ENCODE measurements at regions of chr18 and their contacts with region 1.

Region 1: DNA sequence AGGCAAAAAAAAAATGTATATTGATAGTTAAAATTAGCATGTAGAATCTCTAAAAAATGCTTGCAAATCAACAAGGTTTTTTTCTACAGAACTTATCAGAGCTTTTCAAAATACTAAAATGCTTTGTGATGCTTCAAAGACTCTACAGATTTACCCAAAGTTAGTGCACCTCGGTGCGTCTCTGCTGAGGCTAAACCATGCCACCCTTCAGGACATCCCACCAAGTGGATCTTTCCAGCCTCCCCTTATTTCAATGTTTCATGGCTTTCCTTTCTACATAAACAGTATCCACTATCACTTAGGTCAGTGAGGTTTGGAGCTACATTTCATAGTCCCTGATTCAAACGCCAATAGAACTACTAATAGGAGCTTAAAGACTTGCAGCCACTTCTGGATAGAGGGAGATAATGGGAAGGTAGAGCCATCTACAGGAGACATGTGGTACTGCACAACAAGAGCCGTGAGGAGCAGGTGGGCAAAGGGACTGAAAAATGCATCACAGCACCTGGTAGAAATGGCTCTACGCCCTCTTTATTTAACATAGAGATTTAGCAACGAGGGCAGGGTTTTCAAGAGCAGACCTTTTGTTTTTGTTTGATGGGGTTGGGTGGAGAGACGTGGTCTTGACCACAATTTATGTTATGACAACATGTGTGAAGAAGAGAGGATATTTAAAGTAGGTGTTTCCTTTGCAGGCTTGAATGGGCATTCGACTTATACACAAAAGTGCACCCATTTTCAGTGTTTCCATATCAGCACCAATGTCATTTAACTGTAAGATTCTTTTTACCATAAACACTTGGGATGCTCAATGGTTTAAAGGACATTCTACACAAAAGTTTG is 56.1 kb upstream of the SLC35G4 start:
- DNase-seq: peak; percentile 53
- H3K4me3 Mint-ChIP-seq: no peak overlapping the region
- H3K27ac Mint-ChIP-seq: no peak overlapping the region
- H3K4me1 Mint-ChIP-seq: no peaks in the 10 kb centered on the region
- H3K27me3 Mint-ChIP-seq: peaks cover 66% of the 10 kb centered on the region
- CTCF ChIP-seq: peak; percentile 76

Region 2: DNA sequence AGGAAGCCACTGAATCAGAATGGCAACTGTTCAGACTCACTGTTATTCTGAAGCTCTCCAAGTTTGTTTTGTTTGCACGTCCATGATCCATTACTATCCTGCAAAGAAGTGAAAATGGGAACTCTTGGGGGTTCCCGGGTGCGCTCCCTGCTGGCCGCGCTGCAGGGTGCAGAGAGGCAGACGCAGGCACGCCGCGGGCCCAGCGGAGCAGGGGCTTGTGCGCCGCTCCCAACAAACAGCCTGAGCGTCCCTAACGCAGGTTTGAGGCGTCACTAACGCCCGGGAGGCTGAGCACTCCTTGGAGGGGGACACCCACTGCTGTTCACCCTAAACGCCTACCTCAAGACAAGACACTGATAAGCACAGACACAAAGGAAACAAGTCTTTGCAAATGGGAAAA is 389.7 kb before region 1 on chr18:
- CTCF ChIA-PET with region 1: no interaction called
- intact Hi-C with region 1: loop called (anchors 10 kb)
- DNase-seq: peak; percentile 62
- H3K4me3 Mint-ChIP-seq: peak overlapping the region; percentile 36
- H3K27ac Mint-ChIP-seq: no peak overlapping the region
- H3K4me1 Mint-ChIP-seq: no peaks in the 10 kb centered on the region
- H3K27me3 Mint-ChIP-seq: peaks cover 44% of the 10 kb centered on the region
- CTCF ChIP-seq: peak; percentile 58

Region 3: DNA sequence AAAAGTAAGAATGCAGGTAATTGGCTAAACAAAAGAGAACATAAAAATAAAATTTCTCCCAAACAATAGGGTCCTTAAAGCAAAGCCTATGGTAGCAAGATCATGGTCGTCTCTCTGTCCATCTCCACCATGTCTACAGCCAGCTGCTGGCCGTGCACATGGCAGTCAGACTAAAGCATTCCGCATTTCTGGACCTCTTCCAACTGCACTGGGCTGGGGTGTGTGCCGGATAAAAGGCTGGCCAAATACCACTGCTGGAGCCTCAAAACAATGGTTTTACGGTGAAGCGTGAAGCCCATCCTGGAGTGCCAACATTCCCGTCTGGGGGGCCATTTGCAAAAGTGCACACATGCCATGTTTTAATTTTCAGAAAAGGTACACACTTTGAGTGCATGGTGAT is 329.2 kb before region 1 on chr18:
- CTCF ChIA-PET with region 1: no interaction called
- intact Hi-C with region 1: no loop called
- DNase-seq: no peak
- H3K4me3 Mint-ChIP-seq: no peak overlapping the region
- H3K27ac Mint-ChIP-seq: no peak overlapping the region
- H3K4me1 Mint-ChIP-seq: no peaks in the 10 kb centered on the region
- H3K27me3 Mint-ChIP-seq: peaks cover 57% of the 10 kb centered on the region
- CTCF ChIP-seq: no peak

Region 4: DNA sequence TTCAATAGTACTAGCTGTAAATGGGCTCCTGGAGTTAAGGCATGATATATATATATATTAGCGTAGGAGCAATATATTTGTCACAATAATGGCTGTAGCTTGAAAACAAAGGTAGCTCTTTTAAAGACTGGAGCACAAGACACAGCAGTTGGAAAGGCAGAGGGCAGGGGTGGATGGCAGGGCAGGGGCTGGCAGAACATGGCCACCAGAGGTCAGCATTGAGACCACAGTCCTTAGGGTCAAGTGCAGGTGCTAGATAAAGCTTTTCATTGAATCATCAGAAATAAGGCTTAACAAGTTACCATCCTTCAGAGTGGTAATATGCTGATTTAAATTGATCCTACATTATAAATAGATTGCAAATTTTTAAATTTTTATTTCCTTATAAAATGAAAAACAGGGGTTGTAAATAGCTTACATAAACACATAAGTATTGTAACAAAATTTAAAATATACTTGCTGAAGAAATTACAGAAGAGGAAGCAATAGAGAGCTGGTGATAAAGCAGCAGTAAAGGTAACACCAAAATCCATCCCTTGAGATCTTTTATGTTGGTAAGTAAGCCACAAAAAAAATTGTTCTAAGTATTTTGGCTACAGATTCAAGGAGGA is 242.7 kb before region 1 on chr18:
- CTCF ChIA-PET with region 1: interaction called, 6 read pairs
- intact Hi-C with region 1: loop called (anchors 5 kb)
- DNase-seq: peak; percentile 73
- H3K4me3 Mint-ChIP-seq: no peak overlapping the region
- H3K27ac Mint-ChIP-seq: no peak overlapping the region
- H3K4me1 Mint-ChIP-seq: no peaks in the 10 kb centered on the region
- H3K27me3 Mint-ChIP-seq: peaks cover 8% of the 10 kb centered on the region
- CTCF ChIP-seq: peak; percentile 81

Region 5: DNA sequence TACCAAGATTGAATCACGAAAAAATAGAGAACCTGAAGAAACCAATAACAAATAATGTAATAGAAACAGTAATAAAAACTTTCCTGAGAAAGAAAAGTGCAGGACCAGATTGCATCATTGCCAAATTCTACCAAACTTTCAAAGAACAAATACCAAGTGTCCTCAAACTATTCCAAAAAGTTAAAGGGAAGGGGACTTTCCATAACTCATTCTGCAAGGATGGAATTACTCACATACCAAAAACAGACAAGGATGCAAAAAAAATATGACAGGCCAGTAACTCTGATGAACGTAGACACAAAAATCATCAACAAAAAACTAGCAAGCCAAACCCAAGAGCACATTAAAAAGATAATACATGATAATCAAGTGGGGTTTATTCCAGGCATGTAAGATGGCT is 116.3 kb before region 1 on chr18:
- CTCF ChIA-PET with region 1: no interaction called
- intact Hi-C with region 1: loop called (anchors 10 kb)
- DNase-seq: no peak
- H3K4me3 Mint-ChIP-seq: no peak overlapping the region
- H3K27ac Mint-ChIP-seq: no peak overlapping the region
- H3K4me1 Mint-ChIP-seq: no peaks in the 10 kb centered on the region
- H3K27me3 Mint-ChIP-seq: peaks cover 28% of the 10 kb centered on the region
- CTCF ChIP-seq: no peak

Region 6: DNA sequence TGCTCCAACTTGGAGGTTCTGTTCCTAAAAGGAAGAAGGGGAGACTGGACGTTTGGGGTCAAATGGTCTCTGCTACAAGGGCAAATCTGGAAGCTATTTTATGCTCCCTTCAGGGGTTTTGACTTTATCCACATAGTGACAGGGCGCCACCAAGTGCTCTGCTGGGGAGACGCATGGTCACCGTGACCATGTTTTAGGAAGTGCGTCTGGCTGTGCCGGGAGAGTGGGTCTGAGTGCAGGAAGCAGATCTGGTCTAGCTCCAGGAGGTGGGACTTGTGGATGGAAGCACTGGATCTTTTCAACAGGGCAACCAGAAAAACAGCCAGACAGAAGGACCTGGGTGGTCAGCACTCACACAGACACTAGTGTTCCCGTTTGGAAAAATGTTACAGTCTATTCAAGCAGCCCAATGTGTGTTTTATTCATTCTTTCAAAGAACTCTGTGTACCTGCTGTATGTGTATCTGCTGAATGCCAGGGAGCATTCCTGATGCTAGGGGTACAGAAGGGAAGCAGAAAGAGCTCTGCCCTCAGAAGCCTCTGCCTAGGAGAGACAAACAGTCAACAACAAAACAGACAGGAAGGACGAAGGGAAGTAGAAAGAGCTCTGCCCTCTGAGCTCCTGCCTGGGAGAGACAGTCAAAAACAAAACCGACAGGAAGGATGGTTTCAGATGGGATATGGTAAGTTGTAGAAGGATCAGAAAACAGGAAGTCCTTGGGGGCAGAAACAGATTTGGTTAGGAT is 442.3 kb after region 1 on chr18:
- CTCF ChIA-PET with region 1: interaction called, 12 read pairs
- intact Hi-C with region 1: no loop called
- DNase-seq: peak; percentile 68
- H3K4me3 Mint-ChIP-seq: no peak overlapping the region
- H3K27ac Mint-ChIP-seq: no peak overlapping the region
- H3K4me1 Mint-ChIP-seq: peaks cover 30% of the 10 kb centered on the region
- H3K27me3 Mint-ChIP-seq: no peaks in the 10 kb centered on the region
- CTCF ChIP-seq: peak; percentile 62

Measured in Calu3 (cell line).